Activated naive CD4-positive, alpha-beta T cell treated with anti-CD3 and anti-CD28 coated beads, Interleukin-2, amount 10 ng/mL, durations not matched to agents 7 days and 5 days (primary cell): ENCODE measurements at regions of chr12 and their contacts with region 1.

Region 1: GRCh38 chr12:62799126-62799736 is 135.7 kb downstream of the PPM1H start:
- DNase-seq: peak; percentile 68
- H3K4me3 Mint-ChIP-seq: no peak overlapping the region
- H3K27ac Mint-ChIP-seq: no peak overlapping the region
- H3K4me1 Mint-ChIP-seq: no peaks in the 10 kb centered on the region
- H3K27me3 Mint-ChIP-seq: no peaks in the 10 kb centered on the region

Region 2: DNA sequence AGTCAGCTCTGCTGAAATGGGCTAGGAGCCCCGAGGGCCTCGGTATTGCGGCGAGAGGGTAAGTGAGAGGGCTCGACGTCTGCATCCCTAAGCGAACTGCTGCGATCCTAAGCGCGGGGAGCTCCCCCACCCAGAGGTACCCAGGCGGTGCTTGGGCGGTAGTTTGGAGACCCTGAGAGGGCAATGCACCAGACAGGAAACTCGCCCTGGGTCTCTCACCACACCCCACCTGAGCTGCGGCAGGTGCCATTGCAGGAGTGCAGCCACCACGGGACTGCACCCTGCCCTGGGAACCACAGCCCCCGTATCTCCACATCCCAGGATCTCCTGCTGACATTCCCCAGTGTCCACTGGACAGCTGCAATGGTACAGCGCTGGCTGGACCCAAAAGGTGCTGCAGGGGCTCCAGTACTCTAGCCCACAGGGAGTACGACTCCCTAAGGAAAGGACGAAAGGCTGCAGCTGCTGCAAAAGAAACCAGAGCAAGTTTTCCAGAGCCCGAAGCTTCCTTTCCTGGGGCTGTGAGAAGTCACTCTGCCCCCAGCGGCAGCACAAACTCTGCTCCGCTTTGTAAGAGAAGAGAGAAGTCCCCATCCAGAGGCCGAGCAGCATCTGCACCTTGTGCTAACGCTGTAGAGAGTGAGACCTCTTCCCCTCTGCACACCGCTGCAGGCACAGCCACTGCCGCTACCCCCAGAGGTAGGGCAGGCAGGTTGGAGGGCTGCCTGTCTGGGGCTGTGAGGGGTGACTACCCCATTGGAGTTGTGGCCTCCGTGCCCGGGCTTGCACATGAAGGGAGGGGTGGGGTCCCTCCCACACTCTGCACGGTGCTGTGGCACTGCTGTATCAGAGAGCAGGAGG is 363.7 kb before region 1 on chr12:
- CTCF ChIA-PET with region 1: interaction called, 129 read pairs
- DNase-seq: peak; percentile 60
- H3K4me3 Mint-ChIP-seq: peak overlapping the region; percentile 73
- H3K27ac Mint-ChIP-seq: no peak overlapping the region
- H3K4me1 Mint-ChIP-seq: peaks cover 21% of the 10 kb centered on the region
- H3K27me3 Mint-ChIP-seq: peaks cover 42% of the 10 kb centered on the region

Region 3: GRCh38 chr12:62581288-62582064 is 217.8 kb before region 1 on chr12:
- CTCF ChIA-PET with region 1: interaction called, 60 read pairs
- DNase-seq: no peak
- H3K4me3 Mint-ChIP-seq: no peak overlapping the region
- H3K27ac Mint-ChIP-seq: no peak overlapping the region
- H3K4me1 Mint-ChIP-seq: no peaks in the 10 kb centered on the region
- H3K27me3 Mint-ChIP-seq: no peaks in the 10 kb centered on the region

Region 4: GRCh38 chr12:62703011-62703380 is 96.2 kb before region 1 on chr12:
- CTCF ChIA-PET with region 1: no interaction called
- DNase-seq: no peak
- H3K4me3 Mint-ChIP-seq: no peak overlapping the region
- H3K27ac Mint-ChIP-seq: no peak overlapping the region
- H3K4me1 Mint-ChIP-seq: peaks cover 2% of the 10 kb centered on the region
- H3K27me3 Mint-ChIP-seq: peaks cover 12% of the 10 kb centered on the region

Region 5: GRCh38 chr12:62813031-62813829 is 14.0 kb after region 1 on chr12:
- CTCF ChIA-PET with region 1: interaction called, 14 read pairs
- DNase-seq: peak; percentile 49
- H3K4me3 Mint-ChIP-seq: no peak overlapping the region
- H3K27ac Mint-ChIP-seq: no peak overlapping the region
- H3K4me1 Mint-ChIP-seq: peaks cover 13% of the 10 kb centered on the region
- H3K27me3 Mint-ChIP-seq: peaks cover 14% of the 10 kb centered on the region

Region 6: GRCh38 chr12:63179224-63179623 is 380.0 kb after region 1 on chr12:
- CTCF ChIA-PET with region 1: no interaction called
- DNase-seq: no peak
- H3K4me3 Mint-ChIP-seq: no peak overlapping the region
- H3K27ac Mint-ChIP-seq: no peak overlapping the region
- H3K4me1 Mint-ChIP-seq: no peaks in the 10 kb centered on the region
- H3K27me3 Mint-ChIP-seq: no peaks in the 10 kb centered on the region